CD8-positive, alpha-beta T cell (primary cell): ENCODE measurements at regions of chr2 and their contacts with region 1.

Region 1: DNA sequence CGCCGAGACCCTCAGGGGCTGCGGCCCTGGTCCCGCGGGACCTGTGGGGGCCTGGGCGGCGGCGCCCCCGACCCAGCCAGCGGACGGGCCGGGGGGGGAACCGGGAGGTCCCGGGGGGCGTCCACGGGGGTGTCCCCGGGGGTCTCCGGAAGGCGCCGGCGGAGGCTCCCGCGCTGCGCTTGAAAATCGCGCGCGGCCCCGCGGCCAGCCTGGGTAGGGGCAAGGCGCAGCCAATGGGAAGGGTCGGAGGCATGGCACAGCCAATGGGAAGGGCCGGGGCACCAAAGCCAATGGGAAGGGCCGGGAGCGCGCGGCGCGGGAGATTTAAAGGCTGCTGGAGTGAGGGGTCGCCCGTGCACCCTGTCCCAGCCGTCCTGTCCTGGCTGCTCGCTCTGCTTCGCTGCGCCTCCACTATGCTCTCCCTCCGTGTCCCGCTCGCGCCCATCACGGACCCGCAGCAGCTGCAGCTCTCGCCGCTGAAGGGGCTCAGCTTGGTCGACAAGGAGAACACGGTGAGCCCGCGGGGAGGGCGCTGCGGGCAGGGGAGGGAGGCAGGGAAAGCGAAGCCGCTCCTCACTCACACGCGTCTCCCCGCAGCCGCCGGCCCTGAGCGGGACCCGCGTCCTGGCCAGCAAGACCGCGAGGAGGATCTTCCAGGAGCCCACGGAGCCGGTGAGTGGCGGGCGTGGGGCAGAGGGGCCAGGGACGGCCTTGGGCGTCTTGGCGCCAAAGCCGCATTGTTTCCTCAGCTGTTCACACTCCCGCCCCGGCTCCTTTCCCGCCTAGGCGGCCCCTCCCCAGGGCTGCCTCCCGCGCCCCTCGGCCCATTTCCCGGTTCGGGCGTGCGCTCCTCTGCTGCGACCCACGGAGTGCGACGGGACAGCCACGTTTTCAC is at the start of gene RRM2:
- DNase-seq: peak; percentile 75 to 93 (median 87)
- ATAC-seq: peak; percentile 75
- H3K4me3 ChIP-seq: peak within 1 kb of the TSS; percentile 49 to 60
- H3K4me3 Mint-ChIP-seq: peak within 1 kb of the TSS; percentile 96
- H3K27ac ChIP-seq: no peak within 1 kb of the TSS
- H3K27ac Mint-ChIP-seq: no peak within 1 kb of the TSS
- H3K4me1 ChIP-seq: peaks cover 33% of the 10 kb centered on the region
- H3K4me1 Mint-ChIP-seq: peaks cover 44% of the 10 kb centered on the region
- H3K27me3 ChIP-seq: peaks cover 13 to 17% of the 10 kb centered on the region in 2 experiments
- H3K27me3 Mint-ChIP-seq: peaks cover 19% of the 10 kb centered on the region
- CTCF ChIP-seq: no peak
- total RNA-seq, gene RRM2: 1.6 to 2.1 TPM

Region 2: DNA sequence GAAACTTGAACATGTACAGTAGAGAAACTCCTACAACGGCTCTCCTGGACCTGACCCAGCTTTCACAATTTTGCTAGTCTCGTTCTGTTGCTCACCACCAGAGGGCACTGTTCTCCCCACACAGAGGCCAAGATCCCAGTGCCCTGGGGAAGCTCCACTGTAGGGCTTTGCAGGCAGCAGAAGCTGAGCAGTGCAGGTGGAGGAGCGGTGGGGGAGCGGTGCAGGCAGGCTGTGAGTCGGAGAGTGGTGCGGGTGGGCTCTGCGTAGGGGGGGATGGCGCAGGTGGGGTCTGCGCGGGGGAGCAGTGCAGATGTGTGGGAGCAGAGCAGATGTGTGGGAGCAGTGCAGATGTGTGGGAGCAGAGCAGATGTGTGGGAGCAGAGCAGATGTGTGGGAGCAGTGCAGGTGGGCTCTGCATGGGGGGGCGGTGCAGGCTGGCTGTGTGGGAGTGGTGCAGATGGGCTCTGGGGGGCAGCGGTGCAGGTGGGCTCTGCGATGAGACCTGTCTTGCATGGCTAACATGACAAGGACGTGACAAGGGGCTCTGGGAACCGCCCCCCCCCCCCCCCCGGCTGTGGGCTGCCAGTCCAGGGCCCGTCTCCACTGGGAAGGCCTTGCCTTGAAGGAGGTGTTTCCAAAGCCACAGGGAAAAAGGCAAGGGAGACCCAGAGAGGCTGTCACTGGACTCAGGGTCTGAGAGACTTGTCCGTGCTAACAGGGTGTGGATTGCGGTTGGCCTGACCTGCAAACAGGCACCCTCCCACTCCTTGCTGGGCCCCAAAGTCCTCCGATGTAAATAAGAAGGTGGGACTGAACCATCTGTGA is 49.8 kb before region 1 on chr2:
- CTCF ChIA-PET with region 1: interaction called, 12 read pairs
- POLR2A ChIA-PET with region 1: no interaction called
- intact Hi-C with region 1: loop called in 1 of 2 experiments (anchors 2 kb)
- DNase-seq: peak; percentile 59 to 89 (median 80)
- ATAC-seq: peak; percentile 97
- H3K4me3 ChIP-seq: no peak overlapping the region
- H3K4me3 Mint-ChIP-seq: no peak overlapping the region
- H3K27ac ChIP-seq: no peak overlapping the region
- H3K27ac Mint-ChIP-seq: no peak overlapping the region
- H3K4me1 ChIP-seq: no peaks in the 10 kb centered on the region
- H3K4me1 Mint-ChIP-seq: peaks cover 4% of the 10 kb centered on the region
- H3K27me3 ChIP-seq: peaks cover 4 to 11% of the 10 kb centered on the region in 2 experiments
- H3K27me3 Mint-ChIP-seq: peaks cover 35% of the 10 kb centered on the region
- CTCF ChIP-seq: peak; percentile 70

Region 3: GRCh38 chr2:10141736-10142642 is 19.4 kb after region 1 on chr2:
- CTCF ChIA-PET with region 1: interaction called, 21 read pairs
- POLR2A ChIA-PET with region 1: no interaction called
- intact Hi-C with region 1: no loop called
- DNase-seq: peak in 5 of 9 experiments; percentile 28 to 49 (median 35)
- ATAC-seq: peak; percentile 62
- H3K4me3 ChIP-seq: no peak overlapping the region
- H3K4me3 Mint-ChIP-seq: peak overlapping the region; percentile 37
- H3K27ac ChIP-seq: no peak overlapping the region
- H3K27ac Mint-ChIP-seq: no peak overlapping the region
- H3K4me1 ChIP-seq: peaks cover 17% of the 10 kb centered on the region
- H3K4me1 Mint-ChIP-seq: peaks cover 18% of the 10 kb centered on the region
- H3K27me3 ChIP-seq: no peaks in the 10 kb centered on the region
- H3K27me3 Mint-ChIP-seq: no peaks in the 10 kb centered on the region
- CTCF ChIP-seq: peak; percentile 17

Region 4: DNA sequence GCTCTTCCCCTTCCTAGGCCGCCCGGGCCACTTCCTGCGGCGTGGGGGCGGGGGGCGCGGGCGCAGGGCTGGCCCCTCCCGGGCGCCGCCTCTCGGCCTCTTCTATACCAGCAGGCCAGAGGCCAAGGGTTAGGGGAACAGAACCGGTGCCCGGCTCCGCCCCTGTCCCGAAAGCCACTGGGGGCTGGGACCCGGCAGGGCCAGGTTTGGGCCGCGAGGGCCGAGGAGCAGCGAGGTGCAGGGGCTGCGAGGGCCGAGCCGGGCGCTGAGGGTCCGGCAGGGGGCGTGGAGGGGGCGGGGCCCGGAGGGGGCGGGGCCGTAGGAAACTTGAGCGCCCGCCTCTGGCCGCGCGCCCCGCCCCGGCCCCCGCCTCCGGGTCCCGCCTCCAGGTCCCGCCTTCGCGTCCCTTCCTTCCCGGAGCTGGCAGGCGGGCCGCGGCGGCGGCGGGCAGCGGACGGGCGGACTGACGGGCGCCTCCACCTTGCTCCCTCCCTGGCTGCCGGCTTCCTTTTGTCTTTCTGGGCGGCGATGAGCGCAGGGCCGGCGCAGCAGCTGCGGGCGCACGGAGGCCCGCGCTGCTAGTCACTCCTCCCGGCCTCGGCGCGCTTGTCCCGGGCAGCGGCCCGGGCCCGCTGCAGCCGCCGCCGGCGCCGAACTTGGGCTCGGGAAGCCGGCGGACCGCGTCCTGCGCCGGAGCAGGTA is 180.0 kb after region 1 on chr2 and contains the start of gene HPCAL1:
- CTCF ChIA-PET with region 1: interaction called, 9 read pairs
- POLR2A ChIA-PET with region 1: no interaction called
- intact Hi-C with region 1: loop called (anchors 1 to 2 kb)
- DNase-seq: peak; percentile 54 to 90 (median 80)
- ATAC-seq: peak; percentile 67
- H3K4me3 ChIP-seq: peak within 1 kb of the TSS; percentile 84 to 86
- H3K4me3 Mint-ChIP-seq: peak within 1 kb of the TSS; percentile 98
- H3K27ac ChIP-seq: peak within 1 kb of the TSS; percentile 52 to 73
- H3K27ac Mint-ChIP-seq: peak within 1 kb of the TSS; percentile 92
- H3K4me1 ChIP-seq: peaks cover 60% of the 10 kb centered on the region
- H3K4me1 Mint-ChIP-seq: peaks cover 70% of the 10 kb centered on the region
- H3K27me3 ChIP-seq: no peaks in the 10 kb centered on the region
- H3K27me3 Mint-ChIP-seq: no peaks in the 10 kb centered on the region
- CTCF ChIP-seq: peak; percentile 61
- total RNA-seq, gene HPCAL1: 25.0 to 25.6 TPM

Region 5: DNA sequence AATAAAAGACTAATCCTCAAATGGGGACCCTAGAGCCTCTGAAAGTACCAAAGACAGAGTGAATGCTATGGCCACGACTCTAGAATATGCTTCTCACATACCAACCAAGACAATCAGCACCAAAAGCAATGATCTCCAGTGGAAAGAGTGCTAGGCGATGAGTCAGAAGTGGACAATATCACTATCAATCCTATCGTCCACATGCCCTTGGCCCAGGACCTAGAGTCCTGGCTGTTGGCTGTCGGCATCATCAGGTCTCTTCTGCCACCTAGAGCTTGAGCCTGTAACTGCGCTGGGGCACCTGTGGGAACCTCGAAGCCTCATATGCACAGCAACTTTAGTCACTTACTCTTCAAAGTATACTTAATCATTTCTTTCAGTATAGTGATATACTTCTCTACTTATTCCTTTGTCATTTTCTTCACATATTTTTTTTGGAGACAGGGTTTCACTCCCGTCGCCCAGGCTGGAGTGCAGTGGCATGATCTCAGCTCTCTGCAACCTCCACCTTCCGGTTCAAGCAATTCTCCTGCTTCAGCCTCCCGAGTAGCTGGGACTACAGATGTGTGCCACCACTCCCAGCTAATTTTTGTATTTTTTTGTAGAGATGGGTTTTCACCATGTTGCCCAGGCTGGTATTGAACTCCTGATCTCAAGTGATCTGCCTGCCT is 537.4 kb after region 1 on chr2:
- CTCF ChIA-PET with region 1: interaction called, 5 read pairs
- POLR2A ChIA-PET with region 1: no interaction called
- intact Hi-C with region 1: loop called (anchors 2 to 5 kb)
- DNase-seq: peak in 5 of 9 experiments; percentile 13 to 36 (median 33)
- ATAC-seq: peak; percentile 46
- H3K4me3 ChIP-seq: no peak overlapping the region
- H3K4me3 Mint-ChIP-seq: no peak overlapping the region
- H3K27ac ChIP-seq: no peak overlapping the region
- H3K27ac Mint-ChIP-seq: no peak overlapping the region
- H3K4me1 ChIP-seq: no peaks in the 10 kb centered on the region
- H3K4me1 Mint-ChIP-seq: peaks cover 8% of the 10 kb centered on the region
- H3K27me3 ChIP-seq: no peaks in the 10 kb centered on the region
- H3K27me3 Mint-ChIP-seq: no peaks in the 10 kb centered on the region
- CTCF ChIP-seq: peak; percentile 29

Region 6: DNA sequence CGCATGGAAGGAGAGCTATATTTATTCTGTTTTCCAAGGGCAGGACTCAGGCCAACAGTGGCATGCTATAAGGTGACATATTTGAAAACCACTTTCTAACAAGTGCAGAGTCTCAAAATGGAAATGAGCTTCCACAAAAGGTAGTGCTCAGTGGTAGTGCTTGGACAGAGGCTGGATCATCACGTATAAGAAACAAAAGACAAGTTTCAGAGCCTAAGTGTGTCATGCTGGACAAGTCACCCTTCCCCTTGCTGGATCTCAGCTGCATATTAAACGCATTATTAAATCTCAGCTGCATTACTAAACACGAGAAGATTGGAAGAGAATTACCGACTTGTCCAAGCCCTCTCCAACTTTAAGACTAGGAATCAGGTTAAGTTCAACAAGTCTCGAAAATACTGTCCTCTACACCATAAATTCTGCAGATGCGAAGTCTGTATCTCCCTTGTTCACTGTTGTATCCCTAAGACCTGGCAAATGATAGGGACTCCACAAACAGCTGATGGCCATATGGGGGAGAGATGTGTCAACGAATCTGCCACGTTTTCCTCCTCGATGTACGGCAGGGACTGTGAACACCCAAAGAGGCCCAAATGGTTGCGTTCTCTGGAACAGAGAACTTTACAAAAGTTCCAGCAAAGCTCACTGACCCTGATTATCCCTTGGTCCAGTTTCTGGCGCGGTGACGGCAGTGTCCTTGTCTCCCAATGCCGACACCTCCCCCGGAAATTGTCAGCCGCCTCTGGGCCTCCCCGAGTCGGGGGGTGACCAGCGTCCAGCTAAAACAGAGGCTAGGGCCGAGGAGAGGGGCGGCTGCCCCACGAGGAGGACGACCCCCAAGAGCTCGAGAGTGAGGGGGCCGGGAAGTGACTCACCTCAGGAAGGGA is 566.5 kb after region 1 on chr2:
- CTCF ChIA-PET with region 1: no interaction called
- POLR2A ChIA-PET with region 1: no interaction called
- intact Hi-C with region 1: loop called in 1 of 2 experiments (anchors 5 kb)
- DNase-seq: peak in 3 of 9 experiments; percentile 8 to 24 (median 9)
- ATAC-seq: peak; percentile 37
- H3K4me3 ChIP-seq: peak overlapping the region; percentile 96 to 100
- H3K4me3 Mint-ChIP-seq: no peak overlapping the region
- H3K27ac ChIP-seq: peak overlapping the region; percentile 85 to 95
- H3K27ac Mint-ChIP-seq: no peak overlapping the region
- H3K4me1 ChIP-seq: peaks cover 26% of the 10 kb centered on the region
- H3K4me1 Mint-ChIP-seq: peaks cover 9% of the 10 kb centered on the region
- H3K27me3 ChIP-seq: no peaks in the 10 kb centered on the region
- H3K27me3 Mint-ChIP-seq: no peaks in the 10 kb centered on the region
- CTCF ChIP-seq: no peak